HEK293 (cell line): ENCODE measurements at regions of chr5 and their contacts with region 1.

Region 1: GRCh38 chr5:97142521-97143254 is at the start of gene LIX1:
- H3K4me3 ChIP-seq: no peak within 1 kb of the TSS
- H3K27ac ChIP-seq: no peak within 1 kb of the TSS
- H3K4me1 ChIP-seq: peaks cover 11% of the 10 kb centered on the region
- CTCF ChIP-seq: peak; percentile 64; the same call in 1 of the 2 replicates

Region 2: DNA sequence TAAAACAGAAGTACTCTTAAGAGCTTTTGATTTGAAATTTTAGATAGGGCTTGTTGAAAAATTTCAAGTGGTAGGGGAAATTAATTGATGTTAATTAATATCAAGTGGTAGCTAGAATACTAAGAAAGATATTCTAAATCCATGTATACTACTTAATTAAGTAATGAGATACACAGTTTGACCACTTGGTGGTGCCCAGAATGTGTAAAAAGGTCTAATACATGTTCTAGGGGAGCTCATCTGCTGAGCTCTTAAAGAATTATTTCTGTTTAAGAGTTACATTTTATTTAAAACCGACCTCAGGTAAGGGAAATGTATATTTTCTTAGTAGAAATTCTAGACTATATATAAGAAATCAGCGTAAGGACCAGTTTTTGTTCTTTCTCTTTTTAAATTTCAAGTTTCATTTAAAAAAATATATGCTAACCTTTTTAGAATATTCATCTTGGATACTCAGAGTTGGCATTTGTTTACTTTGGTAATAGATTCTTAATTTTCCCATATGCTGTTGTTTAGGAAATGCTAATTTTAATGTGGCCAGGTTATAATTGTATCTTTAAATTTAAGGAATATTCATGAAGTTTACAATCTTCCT is 145.3 kb before region 1 on chr5:
- CTCF ChIA-PET with region 1: interaction called, 25 read pairs
- POLR2A ChIA-PET with region 1: no interaction called
- H3K4me3 ChIP-seq: no peak overlapping the region
- H3K27ac ChIP-seq: no peak overlapping the region
- H3K4me1 ChIP-seq: no peaks in the 10 kb centered on the region
- CTCF ChIP-seq: no peak

Region 3: DNA sequence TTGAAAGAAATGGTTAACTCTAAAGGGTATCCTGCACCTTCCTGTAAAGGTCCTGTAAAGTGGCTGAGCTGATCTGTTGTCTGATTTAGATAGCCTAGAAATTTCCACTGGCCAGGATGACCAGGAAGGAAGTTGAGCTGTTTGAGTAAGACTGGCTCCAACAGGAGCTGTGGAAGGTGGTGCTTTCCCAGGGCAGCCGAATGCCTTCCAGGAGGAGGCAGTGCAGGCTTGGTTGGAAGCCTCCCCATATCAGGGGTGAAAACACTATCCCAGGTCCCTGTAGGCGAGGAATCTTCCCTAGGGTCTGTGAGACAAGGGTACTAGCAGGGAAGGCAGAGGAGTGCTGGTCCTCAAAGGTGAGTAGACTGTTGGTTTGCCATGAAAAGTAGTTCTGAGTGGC is 98.6 kb before region 1 on chr5:
- CTCF ChIA-PET with region 1: interaction called, 28 read pairs
- POLR2A ChIA-PET with region 1: no interaction called
- H3K4me3 ChIP-seq: no peak overlapping the region
- H3K27ac ChIP-seq: no peak overlapping the region
- H3K4me1 ChIP-seq: no peaks in the 10 kb centered on the region
- CTCF ChIP-seq: no peak